ENCODE measurements at regions of chr4 and their contacts with region 1.

Region 1: GRCh38 chr4:135408109-135408508 is 1206.5 kb upstream of the PABPC4L start:
- DNase-seq: no peak
- ATAC-seq: no peak

Region 2: DNA sequence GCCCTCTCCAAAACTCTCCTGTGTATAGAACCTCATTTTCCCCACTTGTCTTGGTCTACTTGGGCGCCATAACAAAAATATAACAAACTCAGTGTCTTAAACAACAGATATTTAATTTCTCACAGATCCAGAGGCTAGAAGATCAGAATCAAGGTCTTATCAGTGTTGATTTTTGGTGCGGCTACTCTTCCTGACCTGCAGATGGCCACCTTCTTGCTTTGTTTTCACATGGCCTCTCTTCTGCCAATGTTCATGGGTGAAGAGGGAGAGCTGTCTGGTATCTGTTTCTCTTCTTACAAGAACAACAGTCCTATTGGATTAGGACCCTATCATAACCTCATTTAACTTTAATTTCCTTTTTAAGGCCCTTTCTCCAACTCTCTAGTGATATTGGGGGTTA is 1383.9 kb before region 1 on chr4:
- intact Hi-C with region 1: no loop called
- DNase-seq: no peak
- ATAC-seq: no peak

Region 3: GRCh38 chr4:137000432-137000831 is 1592.3 kb after region 1 on chr4:
- intact Hi-C with region 1: loop called (anchors 5 kb)
- DNase-seq: no peak
- ATAC-seq: peak; percentile 20